ENCODE measurements at regions of chr6 and their contacts with region 1.

Region 1: GRCh38 chr6:105431226-105431625 is 28.3 kb upstream of the PREP start:
- DNase-seq: no peak
- ATAC-seq: peak; percentile 38; the same call in 1 of the 2 replicates
- H3K4me3 Mint-ChIP-seq: no peak overlapping the region
- H3K27ac Mint-ChIP-seq: no peak overlapping the region
- H3K4me1 Mint-ChIP-seq: peaks cover 13% of the 10 kb centered on the region
- H3K27me3 Mint-ChIP-seq: no peaks in the 10 kb centered on the region
- CTCF ChIP-seq: peak; percentile 34

Region 2: DNA sequence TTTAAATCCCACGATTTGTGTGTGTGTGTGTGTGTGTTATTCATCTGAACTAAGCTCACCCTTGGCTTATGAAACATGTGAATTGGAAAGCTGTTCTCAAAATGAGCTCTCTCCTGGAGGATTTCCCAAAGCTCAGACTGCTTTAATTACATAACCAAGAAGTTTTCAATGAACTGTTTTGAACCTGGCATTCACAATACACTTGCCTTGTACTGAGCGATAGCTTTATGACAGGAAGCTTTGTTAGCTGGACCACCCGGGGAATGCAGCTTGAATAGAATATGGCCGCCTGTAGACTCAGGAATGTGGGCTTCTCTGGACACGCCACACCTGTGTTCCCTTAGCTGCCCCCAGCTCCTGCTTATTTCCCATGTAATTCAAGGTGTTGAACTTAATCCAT is 43.0 kb after region 1 on chr6:
- CTCF ChIA-PET with region 1: interaction called, 11 read pairs
- POLR2A ChIA-PET with region 1: no interaction called
- DNase-seq: peak; percentile 22
- ATAC-seq: peak; percentile 97
- H3K4me3 Mint-ChIP-seq: no peak overlapping the region
- H3K27ac Mint-ChIP-seq: peak overlapping the region; percentile 71; the same call in 1 of the 2 replicates
- H3K4me1 Mint-ChIP-seq: peaks cover 15% of the 10 kb centered on the region
- H3K27me3 Mint-ChIP-seq: no peaks in the 10 kb centered on the region
- CTCF ChIP-seq: no peak

Region 3: DNA sequence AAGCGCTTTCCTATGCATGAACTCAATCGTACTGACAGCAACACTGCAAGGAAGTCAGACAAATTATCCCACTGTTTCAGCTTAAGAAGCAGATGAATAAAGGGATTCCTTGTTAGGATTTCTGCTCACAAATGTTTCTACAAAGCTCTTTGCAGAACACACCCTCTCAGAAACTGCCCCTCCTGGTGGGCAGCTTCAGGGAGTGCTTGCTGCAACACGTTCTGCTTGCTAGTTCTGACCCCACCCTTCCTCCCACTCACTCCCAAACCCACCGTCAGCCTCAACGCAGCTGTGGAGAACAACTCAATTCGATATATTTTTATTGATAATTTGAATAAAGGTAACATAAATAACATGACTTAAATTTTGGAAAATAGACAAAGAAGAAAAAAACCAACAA is 404.1 kb after region 1 on chr6:
- CTCF ChIA-PET with region 1: interaction called, 16 read pairs
- POLR2A ChIA-PET with region 1: no interaction called
- DNase-seq: peak; percentile 69
- ATAC-seq: peak; percentile 97
- H3K4me3 Mint-ChIP-seq: no peak overlapping the region
- H3K27ac Mint-ChIP-seq: no peak overlapping the region
- H3K4me1 Mint-ChIP-seq: peaks cover 4% of the 10 kb centered on the region; the same call in 1 of the 2 replicates
- H3K27me3 Mint-ChIP-seq: no peaks in the 10 kb centered on the region; the same call in 1 of the 2 replicates
- CTCF ChIP-seq: peak; percentile 28